PC-3 (cell line): ENCODE measurements at regions of chr10 and their contacts with region 1.

Region 1: DNA sequence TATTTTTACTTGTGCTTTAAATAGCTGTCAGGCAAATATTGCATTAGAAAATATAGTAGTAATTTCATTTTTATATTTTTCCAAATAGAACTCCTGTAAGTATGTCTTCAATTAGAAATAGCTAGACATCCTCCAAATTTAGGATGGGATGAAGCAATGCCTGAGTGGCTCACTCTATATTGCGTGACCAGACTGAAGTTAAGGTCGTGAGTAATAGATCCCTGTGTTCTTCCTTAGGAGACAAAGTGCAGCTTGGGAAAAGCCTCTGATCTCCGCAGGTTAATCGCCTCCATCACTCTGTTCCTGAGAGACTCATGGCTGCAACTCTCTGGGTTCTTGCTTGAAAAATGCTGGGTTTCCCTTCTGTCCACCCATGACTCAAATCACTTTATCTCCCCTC is 484.8 kb upstream of the ANKRD30A start:
- DNase-seq: no peak
- ATAC-seq: no peak
- H3K4me3 ChIP-seq: no peak overlapping the region
- H3K27ac ChIP-seq: no peak overlapping the region
- H3K4me1 ChIP-seq: peaks cover 16% of the 10 kb centered on the region
- H3K27me3 ChIP-seq: no peaks in the 10 kb centered on the region
- CTCF ChIP-seq: no peak

Region 2: GRCh38 chr10:36574207-36574606 is 66.4 kb before region 1 on chr10:
- CTCF ChIA-PET with region 1: no interaction called
- POLR2A ChIA-PET with region 1: no interaction called
- intact Hi-C with region 1: no loop called
- DNase-seq: no peak
- ATAC-seq: no peak
- H3K4me3 ChIP-seq: no peak overlapping the region
- H3K27ac ChIP-seq: no peak overlapping the region
- H3K4me1 ChIP-seq: peaks cover 24% of the 10 kb centered on the region
- H3K27me3 ChIP-seq: no peaks in the 10 kb centered on the region
- CTCF ChIP-seq: no peak

Region 3: GRCh38 chr10:36662571-36662970 is 21.9 kb after region 1 on chr10:
- CTCF ChIA-PET with region 1: no interaction called
- POLR2A ChIA-PET with region 1: no interaction called
- intact Hi-C with region 1: loop called (anchors 2 kb)
- DNase-seq: peak; percentile 86
- ATAC-seq: peak; percentile 89
- H3K4me3 ChIP-seq: no peak overlapping the region
- H3K27ac ChIP-seq: peak overlapping the region; percentile 5; the same call in 1 of the 2 replicates
- H3K4me1 ChIP-seq: peaks cover 12% of the 10 kb centered on the region
- H3K27me3 ChIP-seq: no peaks in the 10 kb centered on the region
- CTCF ChIP-seq: no peak